ENCODE measurements at regions of chr20 and their contacts with region 1.

Region 1: GRCh38 chr20:57391074-57391554 is at the start of gene RBM38:
- DNase-seq: peak; percentile 91
- ATAC-seq: peak; percentile 60
- H3K4me3 Mint-ChIP-seq: peak within 1 kb of the TSS; percentile 83
- H3K27ac Mint-ChIP-seq: peak within 1 kb of the TSS; percentile 97
- H3K4me1 Mint-ChIP-seq: peaks cover 44% of the 10 kb centered on the region
- H3K27me3 Mint-ChIP-seq: no peaks in the 10 kb centered on the region
- total RNA-seq, gene RBM38: 96.5 to 101 TPM

Region 2: GRCh38 chr20:56468316-56469082 is 922.6 kb before region 1 on chr20 and contains the start of gene RTF2:
- CTCF ChIA-PET with region 1: no interaction called
- POLR2A ChIA-PET with region 1: no interaction called
- intact Hi-C with region 1: loop called in 1 of 2 experiments (anchors 5 kb)
- DNase-seq: peak; percentile 98
- ATAC-seq: peak; percentile 97
- H3K4me3 Mint-ChIP-seq: peak within 1 kb of the TSS; percentile 100
- H3K27ac Mint-ChIP-seq: peak within 1 kb of the TSS; percentile 100
- H3K4me1 Mint-ChIP-seq: peaks cover 30% of the 10 kb centered on the region
- H3K27me3 Mint-ChIP-seq: no peaks in the 10 kb centered on the region
- total RNA-seq, gene RTF2: 68.5 to 80.8 TPM

Region 3: GRCh38 chr20:57432874-57433491 is 41.9 kb after region 1 on chr20:
- CTCF ChIA-PET with region 1: no interaction called
- POLR2A ChIA-PET with region 1: no interaction called
- intact Hi-C with region 1: loop called in 1 of 2 experiments (anchors 2 kb)
- DNase-seq: peak; percentile 80
- ATAC-seq: peak; percentile 91
- H3K4me3 Mint-ChIP-seq: no peak overlapping the region
- H3K27ac Mint-ChIP-seq: peak overlapping the region; percentile 83
- H3K4me1 Mint-ChIP-seq: peaks cover 56% of the 10 kb centered on the region
- H3K27me3 Mint-ChIP-seq: no peaks in the 10 kb centered on the region

Region 4: GRCh38 chr20:57526087-57526884 is 135.2 kb after region 1 on chr20:
- CTCF ChIA-PET with region 1: no interaction called
- POLR2A ChIA-PET with region 1: no interaction called
- intact Hi-C with region 1: no loop called
- DNase-seq: peak; percentile 57
- ATAC-seq: no peak
- H3K4me3 Mint-ChIP-seq: no peak overlapping the region
- H3K27ac Mint-ChIP-seq: no peak overlapping the region
- H3K4me1 Mint-ChIP-seq: peaks cover 10% of the 10 kb centered on the region
- H3K27me3 Mint-ChIP-seq: no peaks in the 10 kb centered on the region

Region 5: GRCh38 chr20:57628047-57628961 is 237.2 kb after region 1 on chr20:
- CTCF ChIA-PET with region 1: no interaction called
- POLR2A ChIA-PET with region 1: no interaction called
- intact Hi-C with region 1: loop called in 1 of 2 experiments (anchors 2 kb)
- DNase-seq: peak; percentile 72
- ATAC-seq: peak; percentile 65
- H3K4me3 Mint-ChIP-seq: peak overlapping the region; percentile 76
- H3K27ac Mint-ChIP-seq: peak overlapping the region; percentile 98
- H3K4me1 Mint-ChIP-seq: peaks cover 37% of the 10 kb centered on the region
- H3K27me3 Mint-ChIP-seq: no peaks in the 10 kb centered on the region

Region 6: DNA sequence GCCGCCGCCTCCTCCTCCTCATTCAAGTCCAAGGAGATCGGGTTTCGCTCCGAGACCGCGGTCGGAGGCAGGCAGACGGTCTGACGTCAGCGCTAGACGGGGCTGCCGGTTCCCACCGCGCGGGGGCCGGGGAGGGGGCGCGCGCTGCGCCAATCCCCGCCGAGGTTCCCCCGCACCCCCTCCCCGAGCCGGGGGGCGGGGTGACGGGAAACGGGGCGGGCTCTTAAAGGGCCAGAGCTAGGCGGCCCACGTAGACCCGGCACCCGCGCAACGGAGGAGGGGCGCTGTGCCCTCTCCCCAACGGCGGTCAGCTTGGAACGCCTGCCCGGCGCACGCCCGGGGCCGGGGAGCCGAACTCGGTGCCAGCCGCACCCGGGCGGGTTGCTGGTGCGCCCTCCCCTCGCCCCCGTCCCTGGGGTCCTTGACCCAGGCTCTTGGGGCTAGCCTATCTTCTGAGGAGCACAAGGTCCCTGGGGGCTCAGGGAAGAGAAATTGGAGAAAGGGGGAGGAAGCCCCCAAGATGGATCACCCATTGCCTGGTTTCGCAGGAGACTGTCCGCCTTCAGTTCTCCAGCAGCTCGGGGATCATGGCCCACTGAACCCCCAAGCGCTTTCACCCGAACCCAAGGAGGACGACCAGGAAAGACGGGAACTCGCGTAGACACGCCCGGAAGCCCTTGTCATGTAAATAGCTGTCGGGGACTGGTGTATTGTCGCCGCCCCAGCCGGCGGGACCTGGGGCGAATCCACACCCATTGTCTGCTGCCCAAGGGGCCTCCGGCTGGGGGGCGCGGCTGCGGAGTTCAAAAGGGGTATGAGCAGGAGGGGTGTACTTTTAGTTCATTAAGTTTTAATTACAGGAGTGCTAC is 319.1 kb after region 1 on chr20 and contains the start of gene PMEPA1:
- CTCF ChIA-PET with region 1: no interaction called
- POLR2A ChIA-PET with region 1: no interaction called
- intact Hi-C with region 1: loop called (anchors 1 to 10 kb)
- DNase-seq: peak; percentile 95
- ATAC-seq: peak; percentile 91
- H3K4me3 Mint-ChIP-seq: peak within 1 kb of the TSS; percentile 79
- H3K27ac Mint-ChIP-seq: peak within 1 kb of the TSS; percentile 77
- H3K4me1 Mint-ChIP-seq: peaks cover 20% of the 10 kb centered on the region
- H3K27me3 Mint-ChIP-seq: peaks cover 6% of the 10 kb centered on the region
- total RNA-seq, gene PMEPA1: 1.6 to 1.8 TPM

Region 7: GRCh38 chr20:59032023-59032712 is 1641.1 kb after region 1 on chr20 and contains the start of gene ATP5F1E:
- CTCF ChIA-PET with region 1: no interaction called
- POLR2A ChIA-PET with region 1: no interaction called
- intact Hi-C with region 1: loop called in 1 of 2 experiments (anchors 5 kb)
- DNase-seq: peak; percentile 98
- ATAC-seq: peak; percentile 95
- H3K4me3 Mint-ChIP-seq: peak within 1 kb of the TSS; percentile 87
- H3K27ac Mint-ChIP-seq: peak within 1 kb of the TSS; percentile 96
- H3K4me1 Mint-ChIP-seq: peaks cover 73% of the 10 kb centered on the region
- H3K27me3 Mint-ChIP-seq: no peaks in the 10 kb centered on the region
- total RNA-seq, gene ATP5F1E: 63.5 to 76.1 TPM